Transverse colon (tissue), 4 donors: ENCODE measurements at regions of chr10 and their contacts with region 1.

Region 1: GRCh38 chr10:104121520-104122224 is at the start of gene SFR1:
- DNase-seq: peak; percentile 99
- H3K4me3 ChIP-seq: peak within 1 kb of the TSS; percentile 63 to 77 (median 66)
- H3K27ac ChIP-seq: peak within 1 kb of the TSS; percentile 98 to 100 (median 98)
- H3K4me1 ChIP-seq: peaks cover 7 to 34% (median 11%) of the 10 kb centered on the region in 4 donors
- H3K27me3 ChIP-seq: no peaks in the 10 kb centered on the region
- CTCF ChIP-seq: peak; percentile 47 to 81 (median 66)
- EP300 ChIP-seq: no peak
- POLR2A ChIP-seq: peak; percentile 89
- total RNA-seq, gene SFR1: 4.0 TPM in 3 of 4 donors, not detected in the other

Region 2: GRCh38 chr10:103895411-103896186 is 226.1 kb before region 1 on chr10:
- in situ Hi-C with region 1: loop called in 1 of 4 experiments (anchors 10 kb)
- intact Hi-C with region 1: no loop called
- DNase-seq: no peak
- H3K4me3 ChIP-seq: no peak overlapping the region
- H3K27ac ChIP-seq: peak overlapping the region; percentile 79 to 87 (median 82)
- H3K4me1 ChIP-seq: peaks cover 14 to 37% (median 29%) of the 10 kb centered on the region in 4 donors
- H3K27me3 ChIP-seq: no peaks in the 10 kb centered on the region
- CTCF ChIP-seq: no peak
- EP300 ChIP-seq: no peak
- POLR2A ChIP-seq: no peak

Region 3: DNA sequence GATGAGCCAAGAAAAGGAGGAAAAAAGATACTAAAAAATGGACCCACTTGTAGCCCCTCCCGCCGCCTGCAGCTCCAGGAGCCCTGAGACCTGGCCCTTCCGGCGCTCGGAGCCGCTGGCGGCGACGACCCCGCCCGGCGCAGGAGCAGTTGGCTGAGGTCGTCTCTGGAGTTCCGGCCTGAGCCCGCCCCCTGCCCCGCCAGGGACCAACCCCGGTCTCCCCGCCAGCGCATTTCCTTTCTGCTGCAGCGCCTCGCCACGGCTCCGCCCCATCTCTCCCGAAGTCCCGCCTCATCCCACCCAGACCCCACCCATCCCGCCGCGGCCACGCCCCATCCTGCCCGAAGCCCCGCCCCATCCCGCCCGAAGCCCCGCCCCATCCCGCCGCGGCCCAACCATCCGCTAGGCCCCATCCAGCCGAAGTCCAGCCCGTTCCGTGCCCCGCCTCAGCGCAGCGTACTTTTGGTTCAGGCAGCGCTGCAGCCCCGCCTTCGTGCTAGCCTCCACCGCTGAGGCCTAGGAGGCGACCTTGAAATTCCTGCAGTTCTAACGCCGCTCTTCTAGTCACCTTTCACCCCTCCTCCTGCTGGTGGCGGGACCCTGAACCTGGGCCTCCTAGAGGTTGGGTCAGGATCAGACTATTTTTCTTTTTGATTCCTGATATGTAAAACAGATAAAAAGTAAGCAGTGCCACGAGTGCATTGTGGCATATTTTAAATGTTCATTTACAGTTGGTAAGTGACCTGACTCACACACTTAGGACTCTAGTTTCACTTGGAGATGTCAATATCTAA is 203.4 kb before region 1 on chr10 and contains the start of gene STN1:
- in situ Hi-C with region 1: loop called in 1 of 4 experiments (anchors 10 kb)
- intact Hi-C with region 1: no loop called
- DNase-seq: peak; percentile 98
- H3K4me3 ChIP-seq: peak within 1 kb of the TSS; percentile 45 to 83 (median 62)
- H3K27ac ChIP-seq: peak within 1 kb of the TSS; percentile 90 to 99 (median 96)
- H3K4me1 ChIP-seq: peaks cover 9 to 53% (median 32%) of the 10 kb centered on the region in 4 donors
- H3K27me3 ChIP-seq: no peaks in the 10 kb centered on the region
- CTCF ChIP-seq: peak in 2 of 5 experiments; percentile 32 to 33
- EP300 ChIP-seq: no peak
- POLR2A ChIP-seq: peak; percentile 99
- total RNA-seq, gene STN1: 20.8 to 31.8 (median 26.4) TPM

Region 4: GRCh38 chr10:104146882-104147281 is 25.2 kb after region 1 on chr10:
- in situ Hi-C with region 1: no loop called
- intact Hi-C with region 1: no loop called
- DNase-seq: no peak
- H3K4me3 ChIP-seq: no peak overlapping the region
- H3K27ac ChIP-seq: no peak overlapping the region
- H3K4me1 ChIP-seq: no peaks in the 10 kb centered on the region
- H3K27me3 ChIP-seq: no peaks in the 10 kb centered on the region
- CTCF ChIP-seq: no peak
- EP300 ChIP-seq: no peak
- POLR2A ChIP-seq: no peak

Region 5: GRCh38 chr10:104406715-104407650 is 285.3 kb after region 1 on chr10:
- in situ Hi-C with region 1: no loop called
- intact Hi-C with region 1: no loop called
- DNase-seq: no peak
- H3K4me3 ChIP-seq: no peak overlapping the region
- H3K27ac ChIP-seq: no peak overlapping the region
- H3K4me1 ChIP-seq: no peaks in the 10 kb centered on the region
- H3K27me3 ChIP-seq: no peaks in the 10 kb centered on the region
- CTCF ChIP-seq: peak in 1 of 5 experiments; percentile 14
- EP300 ChIP-seq: no peak
- POLR2A ChIP-seq: no peak

Region 6: GRCh38 chr10:104485632-104486031 is 364.0 kb after region 1 on chr10:
- in situ Hi-C with region 1: no loop called
- intact Hi-C with region 1: no loop called
- DNase-seq: no peak
- H3K4me3 ChIP-seq: no peak overlapping the region
- H3K27ac ChIP-seq: no peak overlapping the region
- H3K4me1 ChIP-seq: no peaks in the 10 kb centered on the region
- H3K27me3 ChIP-seq: no peaks in the 10 kb centered on the region
- CTCF ChIP-seq: peak in 1 of 5 experiments; percentile 11
- EP300 ChIP-seq: no peak
- POLR2A ChIP-seq: no peak